HepG2 (cell line): ENCODE measurements at regions of chr19 and their contacts with region 1.

Region 1: GRCh38 chr19:17255150-17255621 is 9.4 kb downstream of the USHBP1 start:
- DNase-seq: peak; percentile 75
- ATAC-seq: peak; percentile 92
- H3K4me3 ChIP-seq: peak overlapping the region in 1 of 3 experiments; percentile 54; a peak in 2 of 6 replicates
- H3K27ac ChIP-seq: peak overlapping the region; percentile 24
- H3K4me1 ChIP-seq: peaks cover 33% of the 10 kb centered on the region
- H3K27me3 ChIP-seq: no peaks in the 10 kb centered on the region
- CTCF ChIP-seq: no peak; the same call in 1 of the 2 replicates
- EP300 ChIP-seq: no peak
- POLR2A ChIP-seq: no peak
- RAD21 ChIP-seq: no peak

Region 2: DNA sequence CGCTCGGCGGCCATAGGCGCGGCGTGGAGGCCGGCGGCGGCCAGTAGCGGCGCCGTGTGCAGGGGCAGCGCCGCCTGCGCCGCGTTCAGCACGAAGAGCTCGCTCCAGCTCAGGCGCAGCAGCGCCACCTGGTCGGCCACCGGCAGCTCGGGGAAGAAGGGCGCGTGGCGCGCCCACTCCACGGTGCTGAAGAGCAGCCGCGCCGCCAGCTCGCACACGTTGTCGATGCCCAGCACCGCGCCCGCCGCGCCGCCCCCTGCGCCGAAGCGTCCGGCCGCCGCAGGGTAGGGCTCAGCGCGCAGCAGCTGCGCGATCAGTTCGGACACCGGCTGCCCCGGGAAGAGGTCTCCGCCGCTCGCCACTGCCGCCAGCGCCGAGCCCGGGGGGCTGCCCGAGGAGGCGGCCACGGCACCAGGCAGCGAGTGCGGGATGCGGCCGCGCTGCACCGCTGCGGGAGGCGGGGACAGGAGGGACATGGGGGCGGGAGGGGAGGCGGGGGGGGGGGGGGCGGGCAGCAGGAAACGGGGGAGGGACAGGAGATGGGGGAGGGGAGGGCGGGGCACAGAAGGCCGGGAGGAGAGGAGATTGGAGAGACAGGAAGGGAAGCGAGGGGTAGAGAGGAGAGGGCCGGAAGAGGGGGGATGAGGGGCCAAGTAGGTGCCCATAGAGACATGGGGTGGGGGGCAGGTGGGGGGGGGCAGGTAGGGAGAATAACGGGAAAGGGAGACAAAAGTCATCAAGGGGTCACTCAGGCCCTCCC is 19.4 kb before region 1 on chr19:
- CTCF ChIA-PET with region 1: no interaction called
- POLR2A ChIA-PET with region 1: interaction called, 17 read pairs
- in situ Hi-C with region 1: no loop called
- intact Hi-C with region 1: no loop called
- DNase-seq: no peak
- ATAC-seq: no peak
- H3K4me3 ChIP-seq: no peak overlapping the region
- H3K27ac ChIP-seq: no peak overlapping the region
- H3K4me1 ChIP-seq: peaks cover 42% of the 10 kb centered on the region
- H3K27me3 ChIP-seq: no peaks in the 10 kb centered on the region
- CTCF ChIP-seq: no peak
- EP300 ChIP-seq: no peak
- POLR2A ChIP-seq: no peak
- RAD21 ChIP-seq: no peak

Region 3: GRCh38 chr19:17292286-17293097 is 37.3 kb after region 1 on chr19:
- CTCF ChIA-PET with region 1: no interaction called
- POLR2A ChIA-PET with region 1: no interaction called
- in situ Hi-C with region 1: no loop called
- intact Hi-C with region 1: no loop called
- DNase-seq: peak; percentile 51
- ATAC-seq: peak; percentile 80
- H3K4me3 ChIP-seq: no peak overlapping the region
- H3K27ac ChIP-seq: no peak overlapping the region
- H3K4me1 ChIP-seq: no peaks in the 10 kb centered on the region
- H3K27me3 ChIP-seq: no peaks in the 10 kb centered on the region
- CTCF ChIP-seq: peak; percentile 71
- EP300 ChIP-seq: no peak
- POLR2A ChIP-seq: no peak
- RAD21 ChIP-seq: peak; percentile 46